Activated CD4-positive, alpha-beta T cell treated with anti-CD3 and anti-CD28 coated beads, Interleukin-2, amount 10 ng/mL, durations not matched to agents 7 days and 5 days (primary cell): ENCODE measurements at regions of chr22 and their contacts with region 1.

Region 1: GRCh38 chr22:30187529-30188407 is 58.8 kb downstream of the LIF start:
- DNase-seq: peak; percentile 13
- H3K4me3 Mint-ChIP-seq: no peak overlapping the region
- H3K27ac Mint-ChIP-seq: peak overlapping the region; percentile 74
- H3K4me1 Mint-ChIP-seq: peaks cover 96% of the 10 kb centered on the region
- H3K27me3 Mint-ChIP-seq: no peaks in the 10 kb centered on the region

Region 2: DNA sequence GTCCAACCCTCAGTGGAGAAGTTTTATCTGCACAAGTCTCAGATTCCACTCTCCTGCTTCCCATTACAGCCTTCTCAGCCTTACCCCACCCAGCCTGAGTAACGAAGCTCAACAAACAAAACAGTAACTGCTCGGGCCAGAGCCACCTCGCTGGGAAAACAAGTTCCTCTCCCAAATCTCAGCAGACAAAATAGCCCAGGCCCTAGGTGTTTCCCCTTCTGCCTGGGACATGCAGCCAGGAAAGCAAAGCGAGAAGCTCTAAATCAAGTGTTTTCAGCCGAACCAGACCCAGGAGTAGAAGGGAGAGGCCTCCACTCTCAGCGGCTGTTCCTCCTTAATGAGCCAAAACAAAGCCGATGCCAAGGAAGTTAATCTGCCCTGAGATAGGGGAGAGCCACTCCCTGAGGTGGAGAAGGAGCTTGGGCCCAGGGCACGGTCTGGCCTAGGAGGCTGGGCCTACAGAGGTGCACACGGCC is 14.8 kb after region 1 on chr22:
- CTCF ChIA-PET with region 1: interaction called, 23 read pairs
- POLR2A ChIA-PET with region 1: no interaction called
- DNase-seq: no peak
- H3K4me3 Mint-ChIP-seq: no peak overlapping the region
- H3K27ac Mint-ChIP-seq: no peak overlapping the region
- H3K4me1 Mint-ChIP-seq: peaks cover 35% of the 10 kb centered on the region
- H3K27me3 Mint-ChIP-seq: no peaks in the 10 kb centered on the region

Region 3: DNA sequence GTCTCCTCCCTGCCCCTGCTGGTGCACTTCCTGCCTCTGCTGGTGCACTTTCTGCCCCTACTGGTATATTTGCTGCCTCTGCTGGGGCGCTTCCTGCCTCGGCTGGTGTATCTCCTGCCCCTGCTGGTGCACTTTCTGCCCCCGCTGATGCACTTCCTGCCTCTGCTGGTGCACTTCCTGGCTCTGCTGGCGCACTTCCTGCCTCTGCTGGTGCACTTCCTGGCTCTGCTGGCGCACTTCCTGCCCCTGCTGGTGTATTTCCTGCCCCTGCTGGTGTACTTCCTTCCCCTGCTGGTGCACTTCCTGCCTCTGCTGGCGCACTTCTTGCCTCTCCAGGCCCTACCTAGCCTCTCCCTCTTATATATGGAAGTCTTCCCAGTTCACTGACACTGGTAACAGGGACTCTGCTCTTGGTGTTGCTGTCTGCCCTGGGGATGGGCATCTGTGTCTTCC is 247.9 kb after region 1 on chr22:
- CTCF ChIA-PET with region 1: no interaction called
- POLR2A ChIA-PET with region 1: no interaction called
- DNase-seq: peak; percentile 82
- H3K4me3 Mint-ChIP-seq: peak overlapping the region; percentile 69
- H3K27ac Mint-ChIP-seq: peak overlapping the region; percentile 96
- H3K4me1 Mint-ChIP-seq: peaks cover 23% of the 10 kb centered on the region
- H3K27me3 Mint-ChIP-seq: peaks cover 10% of the 10 kb centered on the region